Caco-2 (cell line): ENCODE measurements at regions of chr1 and their contacts with region 1.

Region 1: DNA sequence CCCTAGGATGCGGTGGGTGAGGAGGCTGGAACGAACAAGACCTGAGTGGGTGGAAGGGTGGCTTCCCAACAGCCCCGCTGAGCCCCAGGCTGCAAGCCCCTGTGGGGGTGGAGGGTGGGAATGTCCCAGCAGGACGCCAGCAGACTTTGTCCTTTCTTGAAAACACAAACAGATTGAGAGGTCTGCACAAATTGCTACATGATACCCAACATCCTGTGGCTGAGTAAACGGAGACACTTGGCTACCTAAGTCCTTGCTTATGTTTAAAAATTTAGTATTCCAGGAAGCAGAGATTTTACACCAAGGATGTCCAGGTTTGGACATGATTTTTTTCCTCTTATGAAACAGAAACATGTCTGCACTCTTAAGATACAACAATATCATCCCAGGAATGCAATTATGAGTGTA is 11.8 kb upstream of the F3 start:
- DNase-seq: no peak
- H3K4me3 ChIP-seq: no peak overlapping the region
- H3K4me3 Mint-ChIP-seq: peak overlapping the region; percentile 27
- H3K27ac Mint-ChIP-seq: no peak overlapping the region
- H3K4me1 ChIP-seq: peaks cover 40% of the 10 kb centered on the region
- H3K4me1 Mint-ChIP-seq: peaks cover 15% of the 10 kb centered on the region
- H3K27me3 ChIP-seq: no peaks in the 10 kb centered on the region
- H3K27me3 Mint-ChIP-seq: no peaks in the 10 kb centered on the region
- CTCF ChIP-seq: no peak

Region 2: GRCh38 chr1:94396356-94397010 is 156.8 kb before region 1 on chr1:
- CTCF ChIA-PET with region 1: no interaction called
- POLR2A ChIA-PET with region 1: no interaction called
- intact Hi-C with region 1: no loop called
- DNase-seq: peak in 1 of 2 experiments; percentile 26
- H3K4me3 ChIP-seq: no peak overlapping the region
- H3K4me3 Mint-ChIP-seq: no peak overlapping the region
- H3K27ac Mint-ChIP-seq: no peak overlapping the region
- H3K4me1 ChIP-seq: peaks cover 16% of the 10 kb centered on the region
- H3K4me1 Mint-ChIP-seq: peaks cover 17% of the 10 kb centered on the region
- H3K27me3 ChIP-seq: no peaks in the 10 kb centered on the region
- H3K27me3 Mint-ChIP-seq: no peaks in the 10 kb centered on the region
- CTCF ChIP-seq: peak in 1 of 2 experiments; percentile 11

Region 3: GRCh38 chr1:94541175-94542087 is 11.9 kb before region 1 on chr1 and contains the start of gene F3:
- CTCF ChIA-PET with region 1: no interaction called
- POLR2A ChIA-PET with region 1: interaction called, 4 read pairs
- intact Hi-C with region 1: loop called (anchors 1 kb)
- DNase-seq: peak; percentile 90 to 91
- H3K4me3 ChIP-seq: peak within 1 kb of the TSS; percentile 83
- H3K4me3 Mint-ChIP-seq: peak within 1 kb of the TSS; percentile 86
- H3K27ac Mint-ChIP-seq: peak within 1 kb of the TSS; percentile 86
- H3K4me1 ChIP-seq: peaks cover 18% of the 10 kb centered on the region
- H3K4me1 Mint-ChIP-seq: peaks cover 11% of the 10 kb centered on the region
- H3K27me3 ChIP-seq: no peaks in the 10 kb centered on the region
- H3K27me3 Mint-ChIP-seq: no peaks in the 10 kb centered on the region
- CTCF ChIP-seq: peak in 1 of 2 experiments; percentile 15
- total RNA-seq, gene F3: 21.7 and 28.5 TPM in 2 replicates

Region 4: GRCh38 chr1:94622757-94623156 is 69.4 kb after region 1 on chr1:
- CTCF ChIA-PET with region 1: no interaction called
- POLR2A ChIA-PET with region 1: no interaction called
- intact Hi-C with region 1: no loop called
- DNase-seq: peak; percentile 25 to 51
- H3K4me3 ChIP-seq: no peak overlapping the region
- H3K4me3 Mint-ChIP-seq: no peak overlapping the region
- H3K27ac Mint-ChIP-seq: peak overlapping the region; percentile 77
- H3K4me1 ChIP-seq: peaks cover 27% of the 10 kb centered on the region
- H3K4me1 Mint-ChIP-seq: no peaks in the 10 kb centered on the region
- H3K27me3 ChIP-seq: no peaks in the 10 kb centered on the region
- H3K27me3 Mint-ChIP-seq: no peaks in the 10 kb centered on the region
- CTCF ChIP-seq: no peak